ENCODE measurements at regions of chr16 and their contacts with region 1.

Region 1: DNA sequence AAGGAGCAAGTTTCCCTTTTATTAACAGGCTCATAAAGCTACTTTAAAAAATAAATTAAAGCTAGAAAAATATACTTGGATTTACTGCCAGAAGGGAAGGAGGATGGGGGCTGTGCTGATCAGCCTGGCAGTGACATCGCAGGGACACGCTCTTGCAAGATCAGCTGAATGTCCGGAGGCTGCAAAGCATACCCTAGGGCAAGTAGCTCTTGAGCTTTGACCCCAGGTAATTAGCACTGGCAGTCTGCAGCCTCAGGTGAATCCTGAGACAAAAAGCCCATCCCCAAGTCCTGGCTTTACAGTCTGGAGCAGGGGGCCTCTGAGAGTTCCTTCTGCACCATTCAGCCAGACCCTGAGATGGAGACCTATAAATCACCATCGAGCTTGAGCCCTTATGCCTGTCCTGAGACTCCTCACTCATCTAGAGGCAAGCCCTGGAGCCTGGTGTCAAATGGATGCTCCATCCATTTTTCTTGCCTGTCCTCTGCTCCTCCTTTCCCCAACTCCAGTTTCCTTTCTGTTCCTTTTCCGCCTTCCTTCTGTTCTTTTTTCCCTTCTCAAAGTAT is 131.7 kb downstream of the TMEM114 start:
- DNase-seq: no peak
- ATAC-seq: no peak
- H3K4me3 ChIP-seq: no peak overlapping the region
- H3K27ac ChIP-seq: no peak overlapping the region
- H3K4me1 ChIP-seq: no peaks in the 10 kb centered on the region
- H3K27me3 ChIP-seq: peaks cover 0 to 12% (median 4%) of the 10 kb centered on the region in 7 donors
- CTCF ChIP-seq: no peak

Region 2: GRCh38 chr16:8326249-8326648 is 132.3 kb before region 1 on chr16:
- intact Hi-C with region 1: loop called in 1 of 10 experiments (anchors 5 kb)
- DNase-seq: no peak
- ATAC-seq: no peak
- H3K4me3 ChIP-seq: no peak overlapping the region
- H3K27ac ChIP-seq: no peak overlapping the region
- H3K4me1 ChIP-seq: no peaks in the 10 kb centered on the region
- H3K27me3 ChIP-seq: peaks cover 0 to 4% (median 0%) of the 10 kb centered on the region in 7 donors
- CTCF ChIP-seq: no peak

Measured in heart right ventricle (tissue), 16 donors.